WTC11 (cell line): ENCODE measurements at regions of chr1 and their contacts with region 1.

Region 1: DNA sequence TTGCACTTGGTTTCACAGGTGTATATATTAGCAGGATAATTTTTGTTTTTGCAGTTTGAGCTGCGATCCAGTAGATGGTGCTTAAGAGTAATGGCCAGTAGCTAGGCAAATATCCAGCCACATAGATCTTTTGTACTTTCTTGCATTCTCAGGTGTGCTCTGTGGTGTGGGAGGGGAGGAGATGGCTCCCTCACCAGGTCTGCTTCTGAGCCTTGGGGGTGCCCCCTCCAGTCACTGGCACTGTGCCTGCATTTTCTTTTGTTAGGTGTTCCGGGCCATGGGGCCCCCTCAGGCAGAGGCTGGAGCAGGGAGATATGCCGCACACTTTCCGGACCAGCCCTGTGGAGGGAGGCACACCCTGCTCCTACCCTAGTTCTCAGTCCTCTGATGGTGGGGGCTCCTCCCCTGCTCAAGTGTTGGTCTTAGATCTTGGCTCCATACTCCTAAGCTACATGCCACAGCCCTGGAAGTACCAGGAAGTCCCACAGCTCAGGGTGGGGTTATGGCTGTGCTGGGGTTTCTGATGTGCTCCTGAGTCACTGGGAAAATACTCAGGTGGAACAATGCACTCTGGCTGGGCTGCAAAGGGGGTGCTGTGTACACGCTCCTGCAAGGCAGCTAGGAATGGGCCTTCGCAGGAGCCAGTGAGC is 197.6 kb upstream of the DMRTA2 start:
- DNase-seq: peak; percentile 32
- ATAC-seq: peak; percentile 90
- H3K4me3 Mint-ChIP-seq: no peak overlapping the region
- H3K27ac Mint-ChIP-seq: peak overlapping the region; percentile 88
- H3K4me1 Mint-ChIP-seq: peaks cover 9% of the 10 kb centered on the region
- H3K27me3 Mint-ChIP-seq: no peaks in the 10 kb centered on the region
- CTCF ChIP-seq: no peak

Region 2: DNA sequence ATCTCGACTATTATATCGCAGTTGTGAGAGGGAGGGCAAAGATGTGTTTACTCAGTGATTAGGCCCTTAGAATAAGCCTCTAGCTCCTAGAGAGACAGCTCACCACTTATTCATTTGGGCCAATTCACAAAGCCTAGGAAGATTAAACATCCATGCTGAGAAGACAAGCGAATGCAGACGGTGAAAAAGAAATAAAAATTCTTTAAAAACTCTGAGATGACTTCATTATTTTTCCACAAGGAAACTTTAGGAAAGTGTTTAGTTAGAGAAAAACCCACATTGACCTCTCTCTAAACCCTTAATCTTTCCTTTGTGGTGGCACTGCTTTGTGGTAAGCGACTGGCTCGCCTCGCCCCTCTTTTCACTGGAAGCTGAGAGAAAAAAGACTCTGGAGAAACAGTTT is 50.7 kb before region 1 on chr1:
- CTCF ChIA-PET with region 1: interaction called, 11 read pairs
- POLR2A ChIA-PET with region 1: no interaction called
- DNase-seq: no peak
- ATAC-seq: peak; percentile 68
- H3K4me3 Mint-ChIP-seq: no peak overlapping the region
- H3K27ac Mint-ChIP-seq: no peak overlapping the region
- H3K4me1 Mint-ChIP-seq: peaks cover 33% of the 10 kb centered on the region
- H3K27me3 Mint-ChIP-seq: no peaks in the 10 kb centered on the region
- CTCF ChIP-seq: no peak

Region 3: DNA sequence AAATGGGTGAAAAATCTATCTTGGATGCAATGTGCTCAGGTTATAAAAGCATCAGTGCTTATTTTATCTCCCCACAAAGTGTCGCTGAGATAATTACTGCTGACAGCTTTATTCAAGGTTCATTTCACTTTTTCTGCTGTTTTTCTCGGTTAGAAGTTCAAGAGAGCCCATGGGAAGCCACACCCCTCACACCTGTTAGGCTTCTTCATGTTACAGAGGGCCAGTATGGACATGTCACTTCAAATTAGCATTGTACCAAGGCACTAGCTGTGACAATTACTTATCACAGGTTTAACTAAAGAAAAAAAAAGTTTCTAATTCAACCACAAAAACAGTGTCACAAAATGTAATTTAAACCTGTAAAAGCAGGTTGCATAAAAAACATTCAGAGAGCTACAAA is 10.2 kb before region 1 on chr1:
- CTCF ChIA-PET with region 1: interaction called, 20 read pairs
- POLR2A ChIA-PET with region 1: interaction called, 4 read pairs
- DNase-seq: no peak
- ATAC-seq: peak; percentile 58
- H3K4me3 Mint-ChIP-seq: peak overlapping the region; percentile 24
- H3K27ac Mint-ChIP-seq: peak overlapping the region; percentile 64
- H3K4me1 Mint-ChIP-seq: peaks cover 17% of the 10 kb centered on the region
- H3K27me3 Mint-ChIP-seq: no peaks in the 10 kb centered on the region
- CTCF ChIP-seq: no peak

Region 4: GRCh38 chr1:50704126-50704525 is 83.3 kb after region 1 on chr1:
- CTCF ChIA-PET with region 1: interaction called, 52 read pairs
- POLR2A ChIA-PET with region 1: no interaction called
- DNase-seq: no peak
- ATAC-seq: no peak
- H3K4me3 Mint-ChIP-seq: no peak overlapping the region
- H3K27ac Mint-ChIP-seq: 0 out of 2 replicates have a peak overlapping the region, but pooled peaks have one; percentile 83
- H3K4me1 Mint-ChIP-seq: peaks cover 54% of the 10 kb centered on the region
- H3K27me3 Mint-ChIP-seq: no peaks in the 10 kb centered on the region
- CTCF ChIP-seq: peak; percentile 75